Activated naive CD4-positive, alpha-beta T cell treated with anti-CD3 and anti-CD28 coated beads for 36 hours (primary cell): ENCODE measurements at regions of chr6 and their contacts with region 1.

Region 1: GRCh38 chr6:153002607-153003365 is at the start of gene MTRF1L:
- DNase-seq: peak; percentile 95
- H3K4me3 Mint-ChIP-seq: peak within 1 kb of the TSS; percentile 98
- H3K27ac Mint-ChIP-seq: peak within 1 kb of the TSS; percentile 94
- H3K4me1 Mint-ChIP-seq: peaks cover 33% of the 10 kb centered on the region
- H3K27me3 Mint-ChIP-seq: no peaks in the 10 kb centered on the region
- total RNA-seq, gene MTRF1L: 11.6 to 12.0 TPM

Region 2: DNA sequence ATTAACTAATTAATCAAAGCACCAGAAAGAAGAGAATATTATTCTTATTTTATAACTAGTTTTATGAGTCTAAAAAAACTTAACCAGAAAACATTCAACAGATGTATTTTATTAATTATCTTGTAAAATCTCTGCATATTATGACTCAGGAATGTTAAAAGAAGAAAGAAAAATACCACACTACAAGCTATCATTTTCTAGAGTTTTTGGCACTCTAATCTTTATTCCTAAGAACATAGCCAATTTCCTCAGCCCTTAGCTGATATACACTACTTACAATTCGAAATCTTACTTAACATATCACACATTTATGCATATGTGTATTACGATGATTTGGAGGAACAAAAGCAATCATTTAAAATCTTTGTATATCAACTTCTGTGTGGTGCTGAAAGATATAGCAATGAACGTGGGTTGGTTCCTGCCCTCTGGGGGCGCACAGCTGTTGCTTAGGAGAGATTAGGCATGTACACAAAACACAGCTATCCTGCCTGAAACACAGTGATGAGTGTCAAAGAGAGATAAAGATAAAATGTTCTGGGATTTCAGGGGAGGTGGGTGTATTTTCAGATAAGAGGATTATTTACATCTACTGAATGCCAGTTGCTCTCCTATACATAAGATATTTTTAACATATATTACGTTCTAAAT is 770.2 kb before region 1 on chr6:
- CTCF ChIA-PET with region 1: no interaction called
- intact Hi-C with region 1: loop called (anchors 5 kb)
- DNase-seq: peak; percentile 54
- H3K4me3 Mint-ChIP-seq: peak overlapping the region; percentile 73
- H3K27ac Mint-ChIP-seq: no peak overlapping the region
- H3K4me1 Mint-ChIP-seq: peaks cover 26% of the 10 kb centered on the region
- H3K27me3 Mint-ChIP-seq: no peaks in the 10 kb centered on the region

Region 3: GRCh38 chr6:152969688-152970418 is 32.9 kb before region 1 on chr6:
- CTCF ChIA-PET with region 1: no interaction called
- intact Hi-C with region 1: loop called (anchors 1 kb)
- DNase-seq: no peak
- H3K4me3 Mint-ChIP-seq: no peak overlapping the region
- H3K27ac Mint-ChIP-seq: peak overlapping the region; percentile 19
- H3K4me1 Mint-ChIP-seq: peaks cover 6% of the 10 kb centered on the region
- H3K27me3 Mint-ChIP-seq: no peaks in the 10 kb centered on the region

Region 4: GRCh38 chr6:152982768-152983636 is 19.8 kb before region 1 on chr6 and contains the start of gene FBXO5:
- CTCF ChIA-PET with region 1: interaction called, 4 read pairs
- intact Hi-C with region 1: loop called (anchors 1 kb)
- DNase-seq: peak; percentile 97
- H3K4me3 Mint-ChIP-seq: peak within 1 kb of the TSS; percentile 99
- H3K27ac Mint-ChIP-seq: peak within 1 kb of the TSS; percentile 100
- H3K4me1 Mint-ChIP-seq: peaks cover 44% of the 10 kb centered on the region
- H3K27me3 Mint-ChIP-seq: no peaks in the 10 kb centered on the region
- total RNA-seq, gene FBXO5: 61.4 to 62.3 TPM

Region 5: DNA sequence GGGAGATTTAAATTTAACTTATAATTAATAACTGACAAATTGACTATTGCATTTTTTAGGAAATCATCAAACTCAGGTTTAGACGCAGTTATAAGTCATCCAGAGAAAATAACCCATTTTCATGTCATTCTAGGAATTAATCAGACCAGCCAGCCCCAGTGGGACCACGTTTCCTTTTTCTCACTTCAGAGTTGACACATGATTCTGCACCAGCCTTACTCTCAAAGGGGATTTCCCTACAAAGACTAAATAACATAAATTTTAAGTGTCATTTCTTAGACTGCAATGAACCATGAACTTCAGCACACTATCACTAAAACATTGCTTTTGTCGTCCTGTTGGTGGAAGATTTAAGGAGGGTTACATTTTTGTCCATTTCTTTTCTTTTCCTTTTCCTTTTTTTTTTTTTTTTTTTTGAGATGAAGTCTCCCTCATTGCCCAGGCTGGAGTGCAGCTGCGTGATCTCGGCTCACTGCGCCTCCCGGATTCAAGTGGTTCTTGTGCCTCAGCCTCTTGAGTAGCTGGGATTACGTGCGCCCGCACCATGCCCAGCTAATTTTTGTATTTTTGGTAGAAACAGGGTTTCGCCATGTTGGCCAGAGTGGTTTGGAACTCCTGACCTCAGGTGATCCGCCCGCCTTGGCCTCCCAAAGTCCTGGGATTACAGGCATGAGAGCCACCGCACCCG is 1350.3 kb after region 1 on chr6:
- CTCF ChIA-PET with region 1: no interaction called
- intact Hi-C with region 1: loop called (anchors 5 kb)
- DNase-seq: peak; percentile 83
- H3K4me3 Mint-ChIP-seq: no peak overlapping the region
- H3K27ac Mint-ChIP-seq: no peak overlapping the region
- H3K4me1 Mint-ChIP-seq: peaks cover 38% of the 10 kb centered on the region
- H3K27me3 Mint-ChIP-seq: peaks cover 25% of the 10 kb centered on the region